Naive thymus-derived CD4-positive, alpha-beta T cell (primary cell): ENCODE measurements at regions of chr15 and their contacts with region 1.

Region 1: GRCh38 chr15:44286814-44287452 is 1.6 kb upstream of the GOLM2 start:
- DNase-seq: peak in 4 of 9 donors; percentile 9 to 30 (median 19)
- ATAC-seq: no peak
- H3K4me3 ChIP-seq: peak overlapping the region; percentile 85
- H3K4me3 Mint-ChIP-seq: peak overlapping the region; percentile 90 to 99 (median 96)
- H3K27ac ChIP-seq: peak overlapping the region; percentile 86
- H3K27ac Mint-ChIP-seq: peak overlapping the region; percentile 95 to 100 (median 99)
- H3K4me1 ChIP-seq: peaks cover 12 to 13% of the 10 kb centered on the region in 2 donors
- H3K4me1 Mint-ChIP-seq: peaks cover 30 to 50% (median 45%) of the 10 kb centered on the region in 7 donors
- H3K27me3 ChIP-seq: no peaks in the 10 kb centered on the region
- H3K27me3 Mint-ChIP-seq: peaks cover 0 to 17% (median 3%) of the 10 kb centered on the region in 5 donors

Region 2: DNA sequence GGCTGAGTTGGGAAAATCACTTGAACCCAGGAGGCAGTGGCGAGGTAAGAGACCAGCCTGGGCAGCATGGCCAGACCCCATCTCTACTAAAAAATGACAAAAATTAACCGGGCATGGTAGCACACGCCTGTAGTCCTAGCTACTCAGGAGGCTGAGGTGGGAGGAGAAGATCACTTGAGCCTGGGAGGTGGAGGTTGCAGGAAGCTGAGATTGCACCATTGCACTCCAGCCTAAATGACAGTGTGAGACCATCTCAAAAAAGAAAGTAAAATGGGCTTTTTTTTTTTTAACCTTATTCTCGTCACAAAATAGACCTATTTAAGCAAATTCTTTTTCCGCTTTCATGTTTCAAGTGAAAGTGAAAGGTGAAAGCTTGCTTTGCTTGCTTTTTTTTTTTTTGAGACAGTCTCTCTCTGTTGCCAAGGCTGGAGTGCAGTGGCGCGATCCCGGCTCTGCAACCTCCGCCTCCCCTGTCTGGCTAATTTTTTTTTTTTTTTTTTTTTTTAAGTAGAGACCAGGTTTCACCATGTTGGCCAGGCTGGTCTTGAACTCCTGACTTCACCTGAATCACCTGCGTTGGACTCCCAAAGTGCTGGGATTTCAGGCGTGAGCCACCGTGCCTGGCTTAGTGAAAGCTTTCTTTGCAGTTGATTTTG is 537.1 kb before region 1 on chr15:
- CTCF ChIA-PET with region 1: no interaction called
- POLR2A ChIA-PET with region 1: no interaction called
- intact Hi-C with region 1: loop called in 1 of 2 experiments (anchors 2 kb)
- DNase-seq: peak in 8 of 9 donors; percentile 38 to 84 (median 77)
- ATAC-seq: peak; percentile 59
- H3K4me3 ChIP-seq: peak overlapping the region; percentile 53
- H3K4me3 Mint-ChIP-seq: peak overlapping the region; percentile 75 to 97 (median 82)
- H3K27ac ChIP-seq: peak overlapping the region; percentile 75
- H3K27ac Mint-ChIP-seq: peak overlapping the region; percentile 77 to 92 (median 90)
- H3K4me1 ChIP-seq: peaks cover 30 to 43% of the 10 kb centered on the region in 2 donors
- H3K4me1 Mint-ChIP-seq: peaks cover 37 to 66% (median 54%) of the 10 kb centered on the region in 7 donors
- H3K27me3 ChIP-seq: no peaks in the 10 kb centered on the region
- H3K27me3 Mint-ChIP-seq: no peaks in the 10 kb centered on the region

Region 3: GRCh38 chr15:43824302-43825246 is 462.4 kb before region 1 on chr15 and contains the start of gene MFAP1:
- CTCF ChIA-PET with region 1: no interaction called
- POLR2A ChIA-PET with region 1: interaction called, 3 read pairs
- intact Hi-C with region 1: loop called in 1 of 2 experiments (anchors 2 kb)
- DNase-seq: peak; percentile 63 to 94 (median 89)
- ATAC-seq: peak; percentile 94
- H3K4me3 ChIP-seq: peak within 1 kb of the TSS; percentile 100
- H3K4me3 Mint-ChIP-seq: peak within 1 kb of the TSS; percentile 94 to 100 (median 98)
- H3K27ac ChIP-seq: peak within 1 kb of the TSS; percentile 97
- H3K27ac Mint-ChIP-seq: peak within 1 kb of the TSS; percentile 95 to 99 (median 98)
- H3K4me1 ChIP-seq: peaks cover 32 to 34% of the 10 kb centered on the region in 2 donors
- H3K4me1 Mint-ChIP-seq: peaks cover 37 to 81% (median 53%) of the 10 kb centered on the region in 7 donors
- H3K27me3 ChIP-seq: no peaks in the 10 kb centered on the region
- H3K27me3 Mint-ChIP-seq: no peaks in the 10 kb centered on the region
- total RNA-seq, gene MFAP1: 8.5 to 37.3 (median 21.8) TPM

Region 4: GRCh38 chr15:44219073-44219472 is 67.9 kb before region 1 on chr15:
- CTCF ChIA-PET with region 1: no interaction called
- POLR2A ChIA-PET with region 1: interaction called, 5 read pairs
- intact Hi-C with region 1: loop called in 1 of 2 experiments (anchors 2 kb)
- DNase-seq: no peak
- ATAC-seq: no peak
- H3K4me3 ChIP-seq: no peak overlapping the region
- H3K4me3 Mint-ChIP-seq: no peak overlapping the region
- H3K27ac ChIP-seq: no peak overlapping the region
- H3K27ac Mint-ChIP-seq: no peak overlapping the region
- H3K4me1 ChIP-seq: no peaks in the 10 kb centered on the region
- H3K4me1 Mint-ChIP-seq: peaks cover 0 to 5% (median 3%) of the 10 kb centered on the region in 7 donors
- H3K27me3 ChIP-seq: no peaks in the 10 kb centered on the region
- H3K27me3 Mint-ChIP-seq: peaks cover 13 to 27% (median 22%) of the 10 kb centered on the region in 5 donors

Region 5: DNA sequence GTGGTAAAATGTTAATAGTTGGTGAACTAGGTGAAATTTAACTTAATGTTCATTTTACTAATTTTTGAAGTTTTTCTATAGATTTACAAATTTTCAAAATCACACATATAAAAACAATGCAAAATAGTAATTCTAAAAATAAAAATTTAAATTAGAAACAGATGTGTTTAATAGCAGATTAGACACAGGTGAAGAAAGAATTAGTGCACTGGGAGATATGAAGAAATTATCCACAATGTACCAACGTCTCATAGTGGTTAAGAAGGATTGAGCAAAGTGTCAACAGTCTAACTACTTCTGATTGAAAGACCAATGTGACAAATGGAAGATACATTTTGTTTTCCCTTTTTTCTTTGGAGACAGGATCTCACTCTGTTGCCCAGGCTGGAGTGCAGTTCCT is 350.0 kb after region 1 on chr15:
- CTCF ChIA-PET with region 1: no interaction called
- POLR2A ChIA-PET with region 1: no interaction called
- intact Hi-C with region 1: no loop called
- DNase-seq: no peak
- ATAC-seq: no peak
- H3K4me3 ChIP-seq: no peak overlapping the region
- H3K4me3 Mint-ChIP-seq: no peak overlapping the region
- H3K27ac ChIP-seq: no peak overlapping the region
- H3K27ac Mint-ChIP-seq: no peak overlapping the region
- H3K4me1 ChIP-seq: no peaks in the 10 kb centered on the region
- H3K4me1 Mint-ChIP-seq: peaks cover 6 to 20% (median 14%) of the 10 kb centered on the region in 7 donors
- H3K27me3 ChIP-seq: no peaks in the 10 kb centered on the region
- H3K27me3 Mint-ChIP-seq: no peaks in the 10 kb centered on the region

Region 6: DNA sequence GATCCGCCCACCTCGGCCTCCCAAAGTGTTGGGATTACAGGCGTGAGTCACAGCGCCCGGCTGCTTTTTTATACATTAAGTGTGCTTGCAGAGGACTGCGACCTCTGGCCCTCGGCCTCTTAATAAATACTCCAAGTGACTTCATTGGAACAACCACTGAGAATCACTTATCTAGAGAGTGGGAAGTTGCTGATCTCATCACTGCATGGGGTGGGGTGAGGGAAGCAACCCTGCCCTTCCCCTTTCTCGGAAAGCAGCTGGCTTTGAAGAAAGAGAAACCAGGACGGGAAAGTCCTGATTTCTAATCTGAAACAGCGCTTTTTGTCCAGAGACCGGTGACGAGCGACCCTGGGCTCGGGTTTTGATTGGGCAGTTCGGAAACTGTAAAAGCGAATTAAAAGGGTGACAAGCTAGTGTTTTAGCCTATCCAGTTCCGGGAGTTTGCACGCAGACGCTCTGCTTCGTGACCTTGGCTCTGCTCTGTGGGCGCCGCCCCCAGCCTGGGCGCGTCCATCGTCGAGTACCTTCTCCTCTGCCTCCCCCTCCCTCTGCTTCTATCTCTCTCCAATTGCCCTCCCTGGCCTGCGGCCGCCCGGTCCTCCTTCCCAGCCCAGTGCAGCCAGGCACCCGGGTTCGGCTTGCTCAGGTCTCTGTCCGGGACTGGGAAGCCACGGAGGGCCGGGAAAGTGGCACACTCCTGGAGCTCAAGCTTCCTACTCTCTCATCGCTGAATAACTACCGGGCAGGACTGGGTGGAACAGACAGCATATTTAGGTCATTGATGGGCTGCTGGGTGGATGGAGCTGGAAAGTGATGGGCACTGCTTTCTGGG is 441.9 kb after region 1 on chr15:
- CTCF ChIA-PET with region 1: no interaction called
- POLR2A ChIA-PET with region 1: no interaction called
- intact Hi-C with region 1: loop called (anchors 5 kb)
- DNase-seq: peak; percentile 75 to 97 (median 96)
- ATAC-seq: peak; percentile 88
- H3K4me3 ChIP-seq: peak overlapping the region; percentile 94
- H3K4me3 Mint-ChIP-seq: peak overlapping the region; percentile 87 to 100 (median 99)
- H3K27ac ChIP-seq: peak overlapping the region; percentile 99
- H3K27ac Mint-ChIP-seq: peak overlapping the region; percentile 98 to 100 (median 100)
- H3K4me1 ChIP-seq: peaks cover 52 to 56% of the 10 kb centered on the region in 2 donors
- H3K4me1 Mint-ChIP-seq: peaks cover 54 to 86% (median 77%) of the 10 kb centered on the region in 7 donors
- H3K27me3 ChIP-seq: no peaks in the 10 kb centered on the region
- H3K27me3 Mint-ChIP-seq: peaks cover 0 to 2% (median 0%) of the 10 kb centered on the region in 5 donors

Region 7: DNA sequence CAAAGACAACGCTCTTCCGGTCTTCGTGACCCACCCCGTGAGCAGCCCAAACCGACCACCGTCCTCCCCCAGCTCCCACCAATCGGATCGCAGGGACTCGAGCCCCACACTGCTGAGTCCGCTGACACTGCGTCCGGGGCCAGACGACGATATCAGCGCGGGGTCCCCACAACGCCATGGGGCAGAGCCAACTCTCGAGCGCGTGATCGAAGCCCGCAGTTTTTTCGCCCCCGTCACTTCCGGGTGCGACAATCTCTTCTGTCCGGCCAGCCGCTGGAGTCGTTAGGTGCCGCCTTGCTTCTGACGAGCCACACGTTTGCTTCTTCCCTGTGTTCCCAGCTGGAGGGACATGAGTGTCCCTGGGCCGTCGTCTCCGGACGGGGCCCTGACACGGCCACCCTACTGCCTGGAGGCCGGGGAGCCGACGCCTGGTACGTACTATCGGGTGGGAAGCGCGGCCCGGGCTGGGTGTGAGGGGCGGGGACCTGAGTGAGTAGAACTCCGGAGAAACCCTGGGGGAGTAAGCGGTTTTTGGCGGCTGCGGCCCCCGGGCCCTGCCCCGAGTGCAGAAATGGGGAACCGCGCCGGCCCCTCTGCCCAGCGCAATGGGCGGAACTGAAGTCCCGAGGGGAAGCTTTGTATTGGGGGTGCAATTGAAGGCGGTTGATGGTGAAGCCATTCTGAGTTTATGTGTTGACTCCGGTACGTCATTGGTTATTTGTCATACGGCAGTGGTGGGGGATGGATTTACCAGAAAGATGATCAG is 1300.3 kb after region 1 on chr15 and contains the start of gene BLOC1S6:
- CTCF ChIA-PET with region 1: no interaction called
- POLR2A ChIA-PET with region 1: no interaction called
- intact Hi-C with region 1: loop called in 1 of 2 experiments (anchors 2 kb)
- DNase-seq: peak; percentile 81 to 91 (median 87)
- ATAC-seq: peak; percentile 87
- H3K4me3 ChIP-seq: peak within 1 kb of the TSS; percentile 87
- H3K4me3 Mint-ChIP-seq: peak within 1 kb of the TSS; percentile 96 to 100 (median 98)
- H3K27ac ChIP-seq: peak within 1 kb of the TSS; percentile 97
- H3K27ac Mint-ChIP-seq: peak within 1 kb of the TSS; percentile 100
- H3K4me1 ChIP-seq: peaks cover 25 to 26% of the 10 kb centered on the region in 2 donors
- H3K4me1 Mint-ChIP-seq: peaks cover 27 to 55% (median 38%) of the 10 kb centered on the region in 7 donors
- H3K27me3 ChIP-seq: no peaks in the 10 kb centered on the region
- H3K27me3 Mint-ChIP-seq: no peaks in the 10 kb centered on the region
- total RNA-seq, gene BLOC1S6: 34.4 to 63.9 (median 50.9) TPM